ENCODE measurements at regions of chr2 and their contacts with region 1.

Region 1: DNA sequence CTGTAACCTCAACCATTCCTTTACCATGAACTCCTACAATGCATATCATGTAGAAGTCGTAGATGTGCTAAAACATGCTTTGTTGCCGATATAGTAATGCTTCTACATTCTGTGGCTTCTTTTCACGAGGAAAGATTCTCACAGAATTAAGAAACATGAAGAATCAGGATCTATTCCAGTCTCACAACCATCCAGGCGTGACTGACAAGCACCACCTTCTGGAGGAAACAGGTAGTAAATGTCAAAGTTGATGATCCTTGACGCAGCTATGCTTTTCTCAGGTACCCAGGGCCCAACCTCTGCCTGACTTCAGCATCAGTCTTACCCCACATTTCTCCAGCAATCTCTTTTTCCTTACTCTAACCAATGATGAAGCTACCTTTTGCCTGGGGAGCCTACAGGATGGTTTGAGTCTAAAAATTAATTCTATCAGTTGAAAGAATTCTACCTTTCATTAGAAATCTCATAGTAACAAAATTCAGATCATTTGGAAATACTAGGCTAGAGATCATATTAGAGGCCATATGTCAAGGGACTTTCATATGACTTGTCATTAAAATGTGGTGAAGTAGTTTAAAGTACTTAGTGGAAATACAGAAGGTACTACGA is 123.3 kb upstream of the RND3 start:
- DNase-seq: peak; percentile 70
- H3K4me3 ChIP-seq: no peak overlapping the region
- H3K27ac ChIP-seq: no peak overlapping the region
- H3K4me1 ChIP-seq: no peaks in the 10 kb centered on the region
- H3K27me3 ChIP-seq: no peaks in the 10 kb centered on the region
- CTCF ChIP-seq: peak; percentile 69 to 87

Region 2: DNA sequence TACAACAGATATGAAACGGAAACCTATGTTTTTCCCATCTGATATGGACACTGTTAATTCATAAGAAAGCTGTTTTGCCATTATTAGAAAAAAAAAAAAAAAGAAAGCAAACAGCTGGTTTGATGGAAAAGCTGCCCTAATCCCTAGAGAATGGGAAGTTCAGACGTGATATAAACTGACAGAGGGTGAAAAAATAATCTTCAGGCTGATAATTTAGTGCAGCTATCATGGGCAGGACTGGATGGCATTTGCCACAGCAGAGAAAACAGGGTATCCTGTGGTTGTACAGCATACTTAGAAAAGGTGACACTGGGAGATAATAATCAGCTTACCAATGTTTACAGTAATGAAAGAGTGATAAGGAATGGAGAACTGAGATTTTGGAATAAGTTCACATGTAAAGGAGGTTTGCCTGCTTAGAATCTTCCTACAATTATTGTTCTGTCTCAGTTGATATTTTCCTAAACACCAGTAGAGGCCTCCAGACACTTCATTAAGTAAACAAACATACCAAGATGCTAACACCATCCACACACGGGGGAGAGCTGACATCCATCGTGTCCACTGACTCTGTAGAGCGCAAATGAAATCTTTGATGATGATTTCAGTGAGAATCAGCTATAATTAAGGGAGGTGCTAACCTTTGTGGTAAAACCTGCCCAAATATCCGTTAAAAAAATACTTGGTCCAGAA is 811.6 kb before region 1 on chr2:
- CTCF ChIA-PET with region 1: no interaction called
- dilution Hi-C with region 1: no loop called
- in situ Hi-C with region 1: no loop called
- intact Hi-C with region 1: loop called (anchors 1 kb)
- DNase-seq: peak; percentile 16
- H3K4me3 ChIP-seq: no peak overlapping the region
- H3K27ac ChIP-seq: no peak overlapping the region
- H3K4me1 ChIP-seq: no peaks in the 10 kb centered on the region
- H3K27me3 ChIP-seq: no peaks in the 10 kb centered on the region
- CTCF ChIP-seq: peak; percentile 33 to 60

Region 3: DNA sequence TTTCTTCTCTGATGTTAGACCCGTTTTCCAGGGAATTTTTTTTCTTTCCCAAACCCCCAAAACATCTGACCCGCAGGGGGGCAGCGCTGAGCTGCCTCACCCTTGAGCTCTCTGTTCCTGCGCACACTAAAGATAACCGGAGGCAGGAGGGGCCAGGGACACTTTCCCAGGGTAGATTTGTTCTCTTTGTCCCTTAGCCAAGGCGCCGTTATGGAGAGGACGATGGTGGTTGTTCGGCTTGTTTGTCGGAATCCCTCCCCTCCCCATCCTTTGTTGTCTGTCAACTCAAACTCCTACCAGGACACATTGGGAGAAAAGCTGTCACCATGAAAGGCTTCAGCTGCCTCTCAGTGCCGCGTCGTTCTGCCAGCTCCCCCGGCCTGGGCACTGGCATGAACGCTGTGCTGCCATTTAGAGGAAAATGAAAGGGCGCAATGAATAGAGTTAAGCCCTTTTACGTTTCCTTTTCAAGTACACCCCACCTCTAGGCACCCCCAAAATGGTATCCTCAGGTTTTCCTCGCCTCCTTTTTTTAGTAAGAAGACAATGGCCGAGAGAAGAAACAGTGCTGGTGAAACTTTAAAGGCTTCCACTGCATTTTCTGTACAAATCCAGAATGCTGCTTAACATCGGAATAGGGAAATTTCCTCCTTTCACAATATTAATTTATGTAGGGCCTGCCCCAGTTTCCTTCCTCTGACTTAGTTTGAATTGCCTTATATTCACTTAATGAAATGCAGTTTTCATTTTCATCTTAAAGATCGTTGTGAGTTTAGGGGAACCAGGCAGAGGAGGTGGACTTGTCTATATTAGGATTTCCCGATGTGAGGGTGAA is 185.4 kb before region 1 on chr2:
- CTCF ChIA-PET with region 1: no interaction called
- dilution Hi-C with region 1: no loop called
- in situ Hi-C with region 1: no loop called
- intact Hi-C with region 1: loop called (anchors 1 kb)
- DNase-seq: no peak
- H3K4me3 ChIP-seq: no peak overlapping the region
- H3K27ac ChIP-seq: no peak overlapping the region
- H3K4me1 ChIP-seq: no peaks in the 10 kb centered on the region
- H3K27me3 ChIP-seq: no peaks in the 10 kb centered on the region
- CTCF ChIP-seq: peak; percentile 18 to 39

Region 4: GRCh38 chr2:150911766-150912280 is 301.0 kb after region 1 on chr2:
- CTCF ChIA-PET with region 1: no interaction called
- dilution Hi-C with region 1: no loop called
- in situ Hi-C with region 1: no loop called
- intact Hi-C with region 1: loop called (anchors 2 kb)
- DNase-seq: peak; percentile 70
- H3K4me3 ChIP-seq: no peak overlapping the region
- H3K27ac ChIP-seq: peak overlapping the region; percentile 30
- H3K4me1 ChIP-seq: peaks cover 19% of the 10 kb centered on the region
- H3K27me3 ChIP-seq: no peaks in the 10 kb centered on the region
- CTCF ChIP-seq: peak in 1 of 2 donors; percentile 36

Region 5: GRCh38 chr2:151071382-151071781 is 460.6 kb after region 1 on chr2:
- CTCF ChIA-PET with region 1: no interaction called
- dilution Hi-C with region 1: no loop called
- in situ Hi-C with region 1: no loop called
- intact Hi-C with region 1: loop called (anchors 5 kb)
- DNase-seq: peak; percentile 44
- H3K4me3 ChIP-seq: no peak overlapping the region
- H3K27ac ChIP-seq: no peak overlapping the region
- H3K4me1 ChIP-seq: no peaks in the 10 kb centered on the region
- H3K27me3 ChIP-seq: no peaks in the 10 kb centered on the region
- CTCF ChIP-seq: peak; percentile 42 to 69

Region 6: DNA sequence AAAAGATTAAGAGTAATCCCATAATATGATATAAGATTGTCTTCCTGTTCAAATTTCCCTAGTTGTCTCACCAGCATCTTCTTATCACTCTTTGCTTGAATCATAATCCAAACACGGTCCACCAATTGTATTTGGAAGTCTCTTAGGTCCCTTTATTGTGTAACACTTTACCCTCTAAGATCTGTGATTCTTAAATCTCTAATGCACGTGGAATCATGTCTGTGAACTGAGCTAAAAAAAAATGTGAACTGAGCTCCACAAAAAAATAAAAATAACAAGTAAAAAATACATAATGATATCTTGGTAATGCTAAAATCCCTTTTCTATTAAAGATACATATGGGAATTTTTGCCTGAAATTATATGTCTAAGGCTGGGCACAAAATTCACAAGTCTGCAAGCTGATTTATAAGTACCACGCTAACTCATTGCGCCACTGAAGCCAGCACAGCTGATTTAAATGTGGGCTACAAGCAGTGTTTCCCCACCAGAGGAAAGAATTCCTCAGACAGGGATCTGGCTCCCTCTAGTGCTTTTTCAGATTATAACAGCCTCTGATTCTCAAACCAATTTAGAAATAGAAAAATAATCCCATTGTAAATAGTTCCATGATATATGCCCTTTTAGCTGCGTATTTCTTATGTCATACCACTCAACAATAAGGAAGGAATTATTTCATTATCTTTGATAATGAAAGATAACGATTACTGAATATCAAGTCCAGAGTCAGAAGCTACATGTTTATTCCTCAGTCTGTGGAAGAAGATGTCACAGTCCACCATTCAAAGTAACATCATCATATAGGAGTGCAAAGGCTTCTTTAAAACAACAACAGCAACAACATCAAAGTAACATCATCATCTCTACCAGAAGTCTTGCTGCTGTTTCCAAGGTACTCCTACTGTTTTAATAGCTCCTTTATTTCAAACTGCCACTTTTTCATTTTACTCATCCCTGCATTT is 628.0 kb after region 1 on chr2:
- CTCF ChIA-PET with region 1: no interaction called
- dilution Hi-C with region 1: no loop called
- in situ Hi-C with region 1: loop called in 1 of 2 experiments (anchors 25 kb)
- intact Hi-C with region 1: loop called (anchors 2 kb)
- DNase-seq: peak; percentile 51
- H3K4me3 ChIP-seq: no peak overlapping the region
- H3K27ac ChIP-seq: no peak overlapping the region
- H3K4me1 ChIP-seq: peaks cover 7% of the 10 kb centered on the region
- H3K27me3 ChIP-seq: no peaks in the 10 kb centered on the region
- CTCF ChIP-seq: peak; percentile 75 to 79